ENCODE measurements at regions of chr14 and their contacts with region 1.

Region 1: DNA sequence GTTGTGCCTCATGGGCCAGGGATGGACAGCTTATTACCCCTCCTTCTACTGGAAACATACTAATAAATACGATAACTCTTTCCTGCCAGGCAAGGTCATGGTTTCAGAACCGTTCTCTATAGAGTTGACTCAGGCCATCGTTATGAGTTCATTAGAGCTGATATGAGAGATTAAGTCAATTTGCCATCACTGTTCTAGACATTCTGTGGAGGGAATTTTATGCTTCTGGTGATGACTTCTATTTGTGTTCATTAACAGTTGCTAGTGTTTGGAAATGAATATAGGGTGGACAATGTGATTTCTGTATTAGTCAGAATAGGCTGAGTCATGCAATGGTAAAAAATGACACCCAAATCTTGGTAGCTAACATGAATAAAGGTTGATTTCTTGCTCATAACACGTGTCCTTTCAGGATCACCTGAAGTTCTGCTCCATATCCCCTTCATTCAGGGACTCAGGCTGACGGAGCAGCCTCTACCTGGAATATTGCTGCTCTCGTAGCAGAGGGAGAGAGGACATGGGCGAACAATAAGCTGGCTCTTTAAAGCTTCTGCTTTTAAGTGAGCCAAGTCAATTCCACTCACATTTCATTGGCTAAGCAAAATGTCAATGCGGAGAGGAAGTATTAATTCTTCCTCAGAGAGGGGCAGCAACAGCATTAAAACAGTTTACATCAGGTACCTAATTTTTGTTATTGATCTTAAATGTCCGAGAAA is 18.5 kb upstream of the TBPL2 start:
- DNase-seq: no peak
- H3K4me3 ChIP-seq: no peak overlapping the region
- H3K27ac ChIP-seq: no peak overlapping the region
- H3K4me1 ChIP-seq: no peaks in the 10 kb centered on the region
- CTCF ChIP-seq: no peak

Region 2: GRCh38 chr14:55265197-55265596 is 193.8 kb before region 1 on chr14:
- CTCF ChIA-PET with region 1: no interaction called
- POLR2A ChIA-PET with region 1: interaction called, 11 read pairs
- intact Hi-C with region 1: no loop called
- DNase-seq: peak; percentile 60
- H3K4me3 ChIP-seq: no peak overlapping the region
- H3K27ac ChIP-seq: no peak overlapping the region
- H3K4me1 ChIP-seq: peaks cover 6% of the 10 kb centered on the region
- CTCF ChIP-seq: peak; percentile 37; the same call in 1 of the 2 replicates

Measured in OCI-LY7 (cell line).